Esophagus squamous epithelium (tissue), 5 donors: ENCODE measurements at regions of chr18 and their contacts with region 1.

Region 1: GRCh38 chr18:77132371-77133050 is at the start of gene MBP:
- DNase-seq: peak; percentile 11
- H3K4me3 ChIP-seq: peak within 1 kb of the TSS; percentile 66 to 94 (median 82)
- H3K27ac ChIP-seq: peak within 1 kb of the TSS; percentile 92 to 95 (median 94)
- H3K4me1 ChIP-seq: peaks cover 30 to 75% (median 36%) of the 10 kb centered on the region in 3 donors
- H3K27me3 ChIP-seq: peaks cover 0 to 15% (median 0%) of the 10 kb centered on the region in 4 donors
- CTCF ChIP-seq: peak in 1 of 6 experiments; percentile 7
- POLR2A ChIP-seq: peak in 3 of 4 donors; percentile 65 to 96 (median 89)
- total RNA-seq, gene MBP: 21.9 to 38.9 (median 25.2) TPM

Region 2: GRCh38 chr18:77000527-77000926 is 132.0 kb before region 1 on chr18:
- intact Hi-C with region 1: loop called (anchors 10 kb)
- DNase-seq: no peak
- H3K4me3 ChIP-seq: peak overlapping the region in 2 of 4 donors; percentile 14 to 47
- H3K27ac ChIP-seq: peak overlapping the region in 1 of 4 donors; percentile 28
- H3K4me1 ChIP-seq: peaks cover 0 to 15% (median 0%) of the 10 kb centered on the region in 3 donors
- H3K27me3 ChIP-seq: no peaks in the 10 kb centered on the region
- CTCF ChIP-seq: peak; percentile 90 to 98 (median 94)
- POLR2A ChIP-seq: no peak

Region 3: DNA sequence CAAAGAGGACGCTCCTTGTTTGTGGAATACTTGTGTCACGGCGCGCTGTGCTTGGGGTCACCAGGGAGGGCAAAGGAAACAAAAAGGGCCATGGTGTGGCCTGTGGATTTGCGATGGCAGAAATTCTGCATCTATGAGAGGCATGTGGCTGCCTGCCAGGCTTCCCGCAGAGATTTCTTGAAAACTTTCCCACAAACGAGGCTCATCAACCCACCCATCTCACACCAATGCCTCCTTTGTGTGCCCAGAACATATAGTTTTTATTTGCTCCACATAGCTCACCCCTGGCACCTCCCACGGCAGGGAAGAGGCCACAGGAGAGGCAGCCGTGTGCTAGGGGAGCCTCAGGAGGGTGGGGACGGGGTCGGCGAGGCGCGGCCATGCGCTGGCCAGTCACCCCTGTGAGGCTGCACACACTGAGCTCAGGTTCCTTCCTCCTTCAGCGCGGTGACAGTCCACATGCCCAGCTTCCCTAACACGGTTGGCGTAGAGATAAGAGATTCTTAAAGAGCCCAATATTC is 100.3 kb before region 1 on chr18:
- intact Hi-C with region 1: no loop called
- DNase-seq: no peak
- H3K4me3 ChIP-seq: no peak overlapping the region
- H3K27ac ChIP-seq: no peak overlapping the region
- H3K4me1 ChIP-seq: peaks cover 0 to 7% (median 0%) of the 10 kb centered on the region in 3 donors
- H3K27me3 ChIP-seq: no peaks in the 10 kb centered on the region
- CTCF ChIP-seq: no peak
- POLR2A ChIP-seq: no peak

Region 4: DNA sequence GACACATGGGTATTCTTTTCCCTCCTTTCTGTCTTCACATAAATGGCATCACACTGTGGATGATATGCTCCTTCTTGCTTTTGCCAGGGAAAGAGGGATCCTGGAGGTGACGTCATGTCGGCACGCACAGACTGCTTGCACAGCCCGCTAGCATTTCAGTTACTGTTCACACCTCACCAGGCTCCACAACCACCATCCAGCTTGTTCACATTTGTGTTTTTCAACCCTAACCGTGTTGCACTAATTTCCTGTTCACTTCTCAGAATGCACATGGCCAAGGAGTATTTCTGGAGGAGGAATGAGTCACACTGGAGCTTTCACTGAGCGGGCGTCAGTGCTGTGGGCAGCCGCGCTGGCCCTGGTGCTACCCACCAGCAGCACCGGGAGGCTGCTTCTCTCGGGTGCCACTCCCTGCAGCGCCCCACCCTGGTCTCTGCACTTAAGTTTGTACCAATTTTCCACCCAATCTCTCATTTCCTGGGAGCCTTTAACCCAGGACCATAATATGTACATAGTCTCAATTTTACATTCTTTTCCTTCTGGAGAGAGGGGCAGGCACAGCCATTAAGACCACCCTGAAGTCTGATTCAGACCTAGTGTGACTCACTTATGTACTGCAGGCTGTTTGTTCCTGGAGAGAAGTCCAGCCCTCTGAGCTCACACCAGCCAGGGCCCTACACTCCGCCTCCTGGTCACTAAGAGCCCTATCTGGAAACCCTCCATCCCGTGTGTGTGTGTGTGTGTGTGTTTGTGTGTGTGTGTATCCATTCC is 65.0 kb before region 1 on chr18:
- intact Hi-C with region 1: loop called (anchors 10 kb)
- DNase-seq: no peak
- H3K4me3 ChIP-seq: peak overlapping the region in 1 of 4 donors; percentile 31
- H3K27ac ChIP-seq: peak overlapping the region; percentile 77 to 93 (median 84)
- H3K4me1 ChIP-seq: peaks cover 54 to 97% (median 74%) of the 10 kb centered on the region in 3 donors
- H3K27me3 ChIP-seq: no peaks in the 10 kb centered on the region
- CTCF ChIP-seq: no peak
- POLR2A ChIP-seq: peak in 1 of 4 donors; percentile 41